Uterus (tissue), 4 donors: ENCODE measurements at regions of chr12 and their contacts with region 1.

Region 1: GRCh38 chr12:131621701-131622421 is 89.0 kb upstream of the SFSWAP start:
- DNase-seq: no peak
- H3K4me3 ChIP-seq: no peak overlapping the region
- H3K27ac ChIP-seq: no peak overlapping the region
- H3K4me1 ChIP-seq: no peaks in the 10 kb centered on the region
- H3K27me3 ChIP-seq: no peaks in the 10 kb centered on the region
- CTCF ChIP-seq: no peak
- POLR2A ChIP-seq: no peak

Region 2: GRCh38 chr12:131340616-131341210 is 281.1 kb before region 1 on chr12:
- intact Hi-C with region 1: loop called (anchors 5 kb)
- DNase-seq: no peak
- H3K4me3 ChIP-seq: no peak overlapping the region
- H3K27ac ChIP-seq: no peak overlapping the region
- H3K4me1 ChIP-seq: no peaks in the 10 kb centered on the region
- H3K27me3 ChIP-seq: no peaks in the 10 kb centered on the region
- CTCF ChIP-seq: no peak
- POLR2A ChIP-seq: no peak

Region 3: GRCh38 chr12:131473741-131474709 is 147.8 kb before region 1 on chr12:
- intact Hi-C with region 1: no loop called
- DNase-seq: no peak
- H3K4me3 ChIP-seq: no peak overlapping the region
- H3K27ac ChIP-seq: no peak overlapping the region
- H3K4me1 ChIP-seq: no peaks in the 10 kb centered on the region
- H3K27me3 ChIP-seq: no peaks in the 10 kb centered on the region
- CTCF ChIP-seq: no peak
- POLR2A ChIP-seq: no peak

Region 4: GRCh38 chr12:131773582-131774221 is 151.8 kb after region 1 on chr12:
- intact Hi-C with region 1: no loop called
- DNase-seq: no peak
- H3K4me3 ChIP-seq: no peak overlapping the region
- H3K27ac ChIP-seq: no peak overlapping the region
- H3K4me1 ChIP-seq: no peaks in the 10 kb centered on the region
- H3K27me3 ChIP-seq: no peaks in the 10 kb centered on the region
- CTCF ChIP-seq: no peak
- POLR2A ChIP-seq: no peak